Adrenal gland (tissue), 19 donors: ENCODE measurements at regions of chr19 and their contacts with region 1.

Region 1: DNA sequence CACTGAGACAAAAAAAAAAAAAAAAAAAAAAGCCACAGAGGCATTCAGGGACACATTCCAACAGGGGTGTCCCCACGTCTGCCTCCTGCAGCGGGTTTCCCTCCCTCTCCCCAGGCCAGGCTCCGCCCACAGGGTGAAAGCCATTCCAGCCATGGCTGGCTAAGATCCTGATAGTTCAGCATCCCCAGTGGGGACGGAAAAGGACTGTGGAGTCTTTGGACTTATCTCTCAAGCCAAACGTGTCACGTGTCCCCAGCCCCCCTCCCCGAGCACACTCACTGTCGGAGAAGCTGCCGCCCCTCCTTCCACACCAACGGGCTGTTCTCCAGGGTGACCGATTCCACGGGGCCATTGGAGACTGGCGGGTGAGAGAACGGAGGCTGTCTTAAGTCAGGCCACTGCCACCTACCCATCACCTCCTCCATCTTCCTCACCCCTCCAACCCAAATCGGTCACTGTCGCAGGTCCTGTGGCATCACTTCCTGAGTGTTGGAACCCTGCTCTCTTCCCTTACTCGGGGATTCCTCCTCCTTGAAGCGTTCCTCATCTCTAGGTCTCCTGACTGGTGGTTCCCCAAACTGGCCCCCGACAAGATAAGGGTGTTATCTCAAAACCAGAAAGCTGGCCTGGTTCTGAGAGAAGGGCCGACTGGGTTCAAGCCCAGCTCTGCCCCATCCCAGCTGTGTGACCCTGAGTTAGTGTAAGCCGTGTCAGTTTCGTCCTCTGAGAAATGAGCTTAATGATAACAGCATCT is 9.1 kb upstream of the FKRP start:
- DNase-seq: peak in 6 of 7 donors; percentile 71 to 83 (median 78)
- H3K4me3 ChIP-seq: no peak overlapping the region
- H3K27ac ChIP-seq: peak overlapping the region in 2 of 5 donors; percentile 52 to 67
- H3K4me1 ChIP-seq: peaks cover 11 to 40% of the 10 kb centered on the region in 2 donors
- H3K27me3 ChIP-seq: no peaks in the 10 kb centered on the region
- CTCF ChIP-seq: no peak
- POLR2A ChIP-seq: no peak

Region 2: GRCh38 chr19:46704379-46705076 is 32.2 kb before region 1 on chr19:
- intact Hi-C with region 1: loop called in 1 of 2 experiments (anchors 5 kb)
- DNase-seq: peak; percentile 66 to 91 (median 78)
- H3K4me3 ChIP-seq: no peak overlapping the region
- H3K27ac ChIP-seq: no peak overlapping the region
- H3K4me1 ChIP-seq: no peaks in the 10 kb centered on the region
- H3K27me3 ChIP-seq: no peaks in the 10 kb centered on the region
- CTCF ChIP-seq: peak; percentile 80 to 99 (median 90)
- POLR2A ChIP-seq: no peak